ENCODE measurements at regions of chr16 and their contacts with region 1.

Region 1: GRCh38 chr16:3059000-3059722 is 6.3 kb upstream of the IL32 start:
- DNase-seq: peak; percentile 93 to 98 (median 96)
- ATAC-seq: peak; percentile 95
- H3K4me3 ChIP-seq: peak overlapping the region; percentile 93
- H3K27ac ChIP-seq: peak overlapping the region; percentile 83
- H3K4me1 ChIP-seq: peaks cover 8 to 38% of the 10 kb centered on the region in 2 experiments
- H3K27me3 ChIP-seq: no peaks in the 10 kb centered on the region
- CTCF ChIP-seq: peak; percentile 87 to 95 (median 91)
- EP300 ChIP-seq: no peak
- POLR2A ChIP-seq: peak; percentile 69
- RAD21 ChIP-seq: peak; percentile 94 to 97

Region 2: DNA sequence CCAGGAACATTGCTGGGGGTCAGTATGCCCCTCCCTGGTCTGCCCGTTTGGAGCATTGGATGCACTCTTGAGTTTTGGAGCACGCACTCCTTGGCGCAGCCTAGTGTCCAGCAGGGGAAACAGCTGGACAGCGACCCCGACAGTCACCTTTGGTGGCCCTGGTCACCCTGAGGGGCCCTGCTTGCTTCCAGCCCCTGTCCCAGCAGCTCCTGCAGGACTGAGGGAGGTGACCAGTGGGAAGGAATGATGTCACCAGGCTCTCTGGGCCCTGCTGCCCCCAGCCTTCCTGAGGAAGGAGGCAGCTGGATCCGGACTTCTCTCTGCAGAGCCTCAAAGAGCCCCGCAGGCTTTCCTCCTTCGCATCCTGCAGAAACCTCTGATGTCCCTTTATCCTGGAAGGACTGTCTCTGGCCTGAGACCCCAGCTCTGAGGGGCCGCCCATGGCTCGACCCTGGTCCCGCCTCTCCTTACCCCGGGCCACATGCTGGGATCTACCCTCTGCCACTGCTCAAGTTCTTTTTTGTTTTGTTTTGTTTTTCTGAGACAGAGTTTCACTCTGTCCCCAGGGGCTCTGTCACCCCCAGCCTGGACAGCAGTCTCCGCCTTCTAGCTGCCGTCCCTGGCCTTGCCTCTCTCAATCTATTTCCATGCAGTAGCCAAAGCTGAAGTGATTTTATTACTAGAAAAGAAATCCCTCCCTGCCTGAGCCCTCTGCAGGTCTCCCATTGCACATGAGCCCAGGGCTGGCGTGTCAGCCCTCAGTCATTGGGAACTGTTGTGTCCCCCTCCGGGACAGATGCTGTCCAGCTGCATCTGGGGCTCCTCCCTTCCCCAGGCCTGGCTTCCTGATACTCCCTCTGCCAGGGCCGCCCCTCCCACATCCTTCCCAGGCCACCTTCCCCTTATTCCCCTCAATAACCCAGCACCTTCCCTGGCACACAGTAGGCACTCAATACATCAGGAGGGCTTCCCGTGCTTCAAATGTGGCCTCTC is 28.4 kb after region 1 on chr16:
- CTCF ChIA-PET with region 1: no interaction called
- POLR2A ChIA-PET with region 1: interaction called, 3 read pairs
- in situ Hi-C with region 1: no loop called
- intact Hi-C with region 1: loop called (anchors 1 kb)
- DNase-seq: peak; percentile 38 to 54 (median 50)
- ATAC-seq: peak; percentile 92
- H3K4me3 ChIP-seq: no peak overlapping the region
- H3K27ac ChIP-seq: no peak overlapping the region
- H3K4me1 ChIP-seq: peaks cover 19 to 61% of the 10 kb centered on the region in 2 experiments
- H3K27me3 ChIP-seq: peaks cover 2 to 22% of the 10 kb centered on the region in 2 experiments; a peak in 3 of 5 replicates
- CTCF ChIP-seq: peak; percentile 70 to 76 (median 72)
- EP300 ChIP-seq: no peak
- POLR2A ChIP-seq: no peak
- RAD21 ChIP-seq: peak; percentile 41 to 65

Region 3: GRCh38 chr16:3099732-3100499 is 40.8 kb after region 1 on chr16:
- CTCF ChIA-PET with region 1: interaction called, 4 read pairs
- POLR2A ChIA-PET with region 1: interaction called, 3 read pairs
- in situ Hi-C with region 1: no loop called
- intact Hi-C with region 1: loop called (anchors 5 kb)
- DNase-seq: peak; percentile 95 to 99 (median 98)
- ATAC-seq: peak; percentile 95
- H3K4me3 ChIP-seq: no peak overlapping the region
- H3K27ac ChIP-seq: peak overlapping the region; percentile 80; the same call in 2 of the 3 replicates
- H3K4me1 ChIP-seq: peaks cover 18 to 29% of the 10 kb centered on the region in 2 experiments
- H3K27me3 ChIP-seq: no peaks in the 10 kb centered on the region; a peak in 1 of 5 replicates
- CTCF ChIP-seq: no peak
- EP300 ChIP-seq: no peak
- POLR2A ChIP-seq: peak; percentile 64
- RAD21 ChIP-seq: no peak

Region 4: GRCh38 chr16:3129137-3130131 is 70.3 kb after region 1 on chr16:
- CTCF ChIA-PET with region 1: interaction called, 20 read pairs
- POLR2A ChIA-PET with region 1: interaction called, 6 read pairs
- in situ Hi-C with region 1: no loop called
- intact Hi-C with region 1: loop called (anchors 1 kb)
- DNase-seq: peak in 3 of 4 experiments; percentile 37 to 91 (median 49)
- ATAC-seq: peak; percentile 77
- H3K4me3 ChIP-seq: peak overlapping the region; percentile 40
- H3K27ac ChIP-seq: peak overlapping the region; percentile 40
- H3K4me1 ChIP-seq: peaks cover 15 to 24% of the 10 kb centered on the region in 2 experiments; a peak in 4 of 5 replicates
- H3K27me3 ChIP-seq: no peaks in the 10 kb centered on the region
- CTCF ChIP-seq: peak; percentile 93 to 95 (median 93)
- EP300 ChIP-seq: no peak
- POLR2A ChIP-seq: peak; percentile 62; the same call in 1 of the 2 replicates
- RAD21 ChIP-seq: peak; percentile 72 to 79

Region 5: DNA sequence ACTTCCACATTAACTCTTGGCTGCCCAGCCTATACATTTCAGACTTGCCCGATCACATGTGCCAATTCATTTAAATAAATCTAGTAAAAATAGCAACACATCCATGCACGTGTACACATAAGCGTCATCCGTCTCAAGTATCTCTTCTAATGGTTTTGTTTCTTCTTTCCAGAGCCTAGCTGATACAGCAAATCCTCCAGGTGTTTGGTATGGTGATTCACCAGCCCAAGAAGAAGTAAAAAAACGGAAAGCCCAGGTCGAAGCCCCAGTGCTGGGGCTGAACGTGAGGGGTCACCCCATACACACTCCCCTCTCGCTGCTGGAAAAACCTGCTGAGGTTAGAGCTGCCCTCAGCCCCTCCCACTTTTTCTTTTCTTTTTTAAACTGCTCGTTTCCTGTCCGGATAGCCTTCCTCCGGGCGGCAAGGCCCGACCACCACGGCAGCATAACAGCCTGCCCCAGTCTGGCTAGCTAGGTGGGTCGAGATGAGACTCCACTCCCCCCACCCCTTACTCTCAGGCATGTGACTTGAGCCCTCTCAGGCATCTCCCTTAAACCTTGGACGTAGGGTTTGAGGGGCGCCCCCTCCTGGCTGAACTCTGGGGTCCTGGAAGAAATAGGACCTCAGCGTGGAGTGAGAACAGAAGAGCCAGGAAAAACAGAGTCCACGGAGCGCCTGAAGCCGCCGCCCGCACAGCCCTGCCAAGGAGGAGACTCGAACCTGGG is 114.9 kb after region 1 on chr16:
- CTCF ChIA-PET with region 1: no interaction called
- POLR2A ChIA-PET with region 1: no interaction called
- in situ Hi-C with region 1: no loop called
- intact Hi-C with region 1: loop called (anchors 10 kb)
- DNase-seq: peak; percentile 69 to 87 (median 72)
- ATAC-seq: peak; percentile 72
- H3K4me3 ChIP-seq: peak overlapping the region; percentile 51
- H3K27ac ChIP-seq: no peak overlapping the region
- H3K4me1 ChIP-seq: peaks cover 0 to 45% of the 10 kb centered on the region in 2 experiments; a peak in 3 of 5 replicates
- H3K27me3 ChIP-seq: peaks cover 0 to 4% of the 10 kb centered on the region in 2 experiments; a peak in 1 of 5 replicates
- CTCF ChIP-seq: peak; percentile 59 to 83 (median 61)
- EP300 ChIP-seq: no peak
- POLR2A ChIP-seq: no peak
- RAD21 ChIP-seq: peak in 1 of 2 experiments; percentile 45; a peak in 3 of 4 replicates